ENCODE measurements at regions of chr12 and their contacts with region 1.

Region 1: GRCh38 chr12:106357549-106358395 is at the start of gene POLR3B:
- DNase-seq: peak; percentile 93 to 94
- ATAC-seq: peak; percentile 85 to 90
- H3K4me3 ChIP-seq: peak within 1 kb of the TSS; percentile 68 to 84 (median 80)
- H3K27ac ChIP-seq: peak within 1 kb of the TSS; percentile 87 to 96 (median 91)
- H3K4me1 ChIP-seq: peaks cover 16 to 18% of the 10 kb centered on the region in 2 donors
- H3K27me3 ChIP-seq: no peaks in the 10 kb centered on the region
- CTCF ChIP-seq: peak; percentile 85 to 93 (median 88)
- POLR2A ChIP-seq: peak; percentile 91 to 92
- total RNA-seq, gene POLR3B: 4.2 to 9.5 (median 6.4) TPM

Region 2: GRCh38 chr12:106149096-106149784 is 208.5 kb before region 1 on chr12:
- in situ Hi-C with region 1: no loop called
- intact Hi-C with region 1: loop called (anchors 5 kb)
- DNase-seq: peak in 1 of 2 donors; percentile 46
- ATAC-seq: peak; percentile 23 to 36
- H3K4me3 ChIP-seq: no peak overlapping the region
- H3K27ac ChIP-seq: peak overlapping the region in 3 of 4 donors; percentile 79 to 80 (median 80)
- H3K4me1 ChIP-seq: peaks cover 38 to 56% of the 10 kb centered on the region in 2 donors
- H3K27me3 ChIP-seq: no peaks in the 10 kb centered on the region
- CTCF ChIP-seq: peak; percentile 50 to 74 (median 59)
- POLR2A ChIP-seq: no peak

Region 3: DNA sequence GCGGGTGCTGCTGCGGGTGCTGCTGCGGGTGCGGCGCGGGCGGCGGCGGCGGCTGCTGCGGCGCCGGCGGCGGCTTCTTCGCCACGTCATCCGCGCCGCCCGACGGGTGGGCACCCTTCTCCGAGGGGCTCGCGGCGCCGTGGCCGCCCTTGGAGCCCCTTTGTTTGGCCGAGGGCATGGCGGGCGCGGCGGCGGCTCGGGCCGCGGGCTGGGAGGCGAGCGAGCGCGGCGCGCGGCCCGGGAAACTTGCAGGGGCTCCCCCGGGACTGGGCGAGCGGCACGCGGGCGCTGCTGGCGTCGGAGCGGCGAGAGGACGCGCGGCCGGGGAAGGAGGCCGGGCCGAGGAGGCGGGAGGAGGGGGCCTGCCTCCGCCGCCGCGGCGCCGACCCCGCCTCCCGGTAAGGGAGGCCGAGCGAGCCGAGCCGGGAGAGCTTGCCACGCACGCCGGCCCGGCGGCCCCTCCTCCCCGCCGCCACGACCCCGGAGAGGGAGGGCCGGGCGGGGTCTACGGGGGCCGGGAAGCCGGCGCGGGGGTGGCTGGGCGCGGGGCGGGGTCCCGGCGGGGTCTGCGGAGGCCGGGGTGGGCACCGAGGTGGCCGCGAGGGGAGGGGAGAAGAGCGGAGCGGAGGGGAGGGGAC is 110.0 kb before region 1 on chr12 and contains the start of gene CKAP4:
- in situ Hi-C with region 1: no loop called
- intact Hi-C with region 1: loop called (anchors 1 kb)
- DNase-seq: peak; percentile 53 to 63
- ATAC-seq: peak; percentile 61 to 73
- H3K4me3 ChIP-seq: peak within 1 kb of the TSS; percentile 65 to 91 (median 86)
- H3K27ac ChIP-seq: peak within 1 kb of the TSS; percentile 90 to 95 (median 94)
- H3K4me1 ChIP-seq: peaks cover 39 to 42% of the 10 kb centered on the region in 2 donors
- H3K27me3 ChIP-seq: no peaks in the 10 kb centered on the region
- CTCF ChIP-seq: peak in 1 of 5 experiments; percentile 3
- POLR2A ChIP-seq: peak; percentile 61 to 62
- total RNA-seq, gene CKAP4: 9.7 to 17.6 (median 15.7) TPM

Region 4: DNA sequence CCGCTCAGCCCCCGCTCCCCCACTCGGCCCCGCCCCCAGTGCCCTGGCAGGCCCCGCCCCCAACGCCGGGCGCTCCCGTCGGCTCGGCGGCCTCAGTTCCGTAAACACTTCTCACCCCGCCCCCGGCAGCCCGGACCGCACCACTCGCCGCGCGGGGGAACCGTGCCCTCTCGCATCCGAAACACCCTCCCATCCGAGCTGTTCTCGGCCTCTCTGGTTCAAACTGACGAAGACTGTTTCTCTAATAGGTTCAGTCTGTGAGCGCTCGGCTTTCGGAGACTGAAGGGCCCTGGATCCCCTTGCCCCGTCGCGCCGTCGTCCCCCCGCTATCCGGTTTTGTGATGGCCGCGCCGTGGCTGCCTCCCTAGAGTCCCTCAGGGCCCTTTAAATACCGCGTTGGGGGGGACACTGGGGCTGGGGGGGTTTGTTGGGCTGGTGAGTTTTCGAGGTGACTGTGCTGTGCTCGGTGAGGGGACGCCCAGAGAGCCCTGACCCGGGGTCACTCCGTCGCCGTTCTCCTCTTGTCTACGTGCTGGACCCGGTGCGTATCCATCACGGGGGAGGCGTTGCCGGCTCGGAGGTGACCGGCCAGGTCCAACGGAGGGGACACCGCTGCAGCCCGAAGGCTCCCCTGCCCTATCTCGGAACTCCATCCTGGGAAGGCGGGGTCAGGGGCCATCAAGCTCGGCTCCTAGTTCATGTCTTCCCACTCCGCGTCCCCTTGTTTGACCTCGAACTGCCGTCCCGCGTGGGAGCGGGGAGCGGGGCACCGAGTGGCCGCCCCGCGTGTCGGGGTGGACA is 55.2 kb before region 1 on chr12 and contains the start of gene TCP11L2:
- in situ Hi-C with region 1: loop called in 1 of 4 experiments (anchors 10 kb)
- intact Hi-C with region 1: loop called (anchors 5 kb)
- DNase-seq: peak; percentile 84 to 86
- ATAC-seq: peak; percentile 57 to 61
- H3K4me3 ChIP-seq: peak within 1 kb of the TSS; percentile 73 to 86 (median 78)
- H3K27ac ChIP-seq: peak within 1 kb of the TSS; percentile 91 to 97 (median 94)
- H3K4me1 ChIP-seq: peaks cover 67 to 70% of the 10 kb centered on the region in 2 donors
- H3K27me3 ChIP-seq: no peaks in the 10 kb centered on the region
- CTCF ChIP-seq: peak in 1 of 5 experiments; percentile 12
- POLR2A ChIP-seq: peak; percentile 79 to 92
- total RNA-seq, gene TCP11L2: 39.1 to 51.7 (median 43.9) TPM

Region 5: GRCh38 chr12:107027636-107028053 is 669.9 kb after region 1 on chr12:
- in situ Hi-C with region 1: no loop called
- intact Hi-C with region 1: loop called (anchors 1 kb)
- DNase-seq: peak; percentile 9 to 23
- ATAC-seq: peak; percentile 98 to 99
- H3K4me3 ChIP-seq: peak overlapping the region; percentile 11 to 39 (median 32)
- H3K27ac ChIP-seq: peak overlapping the region; percentile 76 to 89 (median 84)
- H3K4me1 ChIP-seq: peaks cover 47 to 62% of the 10 kb centered on the region in 2 donors
- H3K27me3 ChIP-seq: no peaks in the 10 kb centered on the region
- CTCF ChIP-seq: no peak
- POLR2A ChIP-seq: peak in 1 of 2 donors; percentile 28